ENCODE measurements at regions of chr2 and their contacts with region 1.

Region 1: GRCh38 chr2:189783927-189784867 is at the starts of genes ORMDL1 and PMS1:
- DNase-seq: peak; percentile 95
- H3K4me3 ChIP-seq: peak within 1 kb of the TSS; percentile 78 to 80
- H3K27ac ChIP-seq: peak within 1 kb of the TSS; percentile 94 to 96
- H3K4me1 ChIP-seq: no peaks in the 10 kb centered on the region
- H3K27me3 ChIP-seq: no peaks in the 10 kb centered on the region
- CTCF ChIP-seq: no peak
- POLR2A ChIP-seq: peak; percentile 80
- total RNA-seq, gene ORMDL1: 48.0 to 86.7 TPM
- total RNA-seq, gene PMS1: 22.3 to 23.8 TPM

Region 2: GRCh38 chr2:190136259-190136658 is 352.1 kb after region 1 on chr2:
- intact Hi-C with region 1: no loop called
- DNase-seq: no peak
- H3K4me3 ChIP-seq: no peak overlapping the region
- H3K27ac ChIP-seq: no peak overlapping the region
- H3K4me1 ChIP-seq: no peaks in the 10 kb centered on the region
- H3K27me3 ChIP-seq: no peaks in the 10 kb centered on the region
- CTCF ChIP-seq: no peak
- POLR2A ChIP-seq: no peak

Region 3: DNA sequence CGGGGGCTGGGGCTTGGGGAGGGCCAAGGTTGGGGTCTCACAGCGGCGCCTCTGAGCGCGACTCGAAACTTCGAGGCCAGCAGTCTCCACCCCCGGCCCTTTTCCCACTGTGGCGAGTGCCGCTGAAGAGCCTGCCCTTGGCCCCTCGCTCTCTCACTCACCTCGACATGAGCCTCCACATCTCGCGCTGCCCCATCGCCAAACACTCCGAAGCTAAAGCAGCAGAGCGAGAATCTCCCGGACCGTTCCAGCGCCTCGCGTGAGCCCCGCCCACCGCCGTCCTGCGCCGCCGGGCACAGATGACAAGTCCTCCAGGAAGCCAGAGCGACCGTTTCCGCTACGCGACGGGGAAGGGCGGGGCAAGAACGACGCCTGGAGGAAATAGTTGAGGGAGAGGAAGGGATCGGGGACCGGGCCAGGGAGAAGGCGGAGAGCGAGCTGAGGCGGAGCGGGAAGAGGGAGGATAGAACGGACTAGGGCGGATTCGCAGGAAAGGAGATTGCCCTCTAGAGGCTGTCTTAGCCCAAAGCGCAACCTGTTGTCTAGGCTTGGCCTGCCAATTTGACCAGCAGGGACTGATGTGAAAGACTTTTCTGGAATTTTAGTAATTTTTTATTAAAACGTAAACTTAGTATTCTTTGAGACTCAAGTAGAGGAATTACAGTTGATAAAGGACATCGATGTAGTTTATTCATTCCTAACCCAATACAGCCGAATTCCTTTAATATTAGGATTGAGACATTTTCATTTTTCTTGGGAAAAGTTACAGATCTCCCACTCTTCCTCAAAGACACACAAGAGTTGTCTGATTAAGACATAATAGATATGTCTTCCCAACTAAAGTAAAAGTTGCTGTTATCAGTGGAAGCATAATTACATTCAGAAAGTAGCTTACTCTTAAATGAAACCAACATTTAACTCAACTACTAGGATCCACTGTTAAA is 535.6 kb after region 1 on chr2 and contains the start of gene HIBCH:
- intact Hi-C with region 1: loop called (anchors 10 kb)
- DNase-seq: peak; percentile 99
- H3K4me3 ChIP-seq: peak within 1 kb of the TSS; percentile 64 to 67
- H3K27ac ChIP-seq: peak within 1 kb of the TSS; percentile 93 to 95
- H3K4me1 ChIP-seq: no peaks in the 10 kb centered on the region
- H3K27me3 ChIP-seq: no peaks in the 10 kb centered on the region
- CTCF ChIP-seq: peak; percentile 47 to 86 (median 78)
- POLR2A ChIP-seq: peak; percentile 89
- total RNA-seq, gene HIBCH: 25.3 to 27.8 TPM

Measured in prostate gland (tissue), 2 donors.